Esophagus muscularis mucosa (tissue), 4 donors: ENCODE measurements at regions of chr17 and their contacts with region 1.

Region 1: DNA sequence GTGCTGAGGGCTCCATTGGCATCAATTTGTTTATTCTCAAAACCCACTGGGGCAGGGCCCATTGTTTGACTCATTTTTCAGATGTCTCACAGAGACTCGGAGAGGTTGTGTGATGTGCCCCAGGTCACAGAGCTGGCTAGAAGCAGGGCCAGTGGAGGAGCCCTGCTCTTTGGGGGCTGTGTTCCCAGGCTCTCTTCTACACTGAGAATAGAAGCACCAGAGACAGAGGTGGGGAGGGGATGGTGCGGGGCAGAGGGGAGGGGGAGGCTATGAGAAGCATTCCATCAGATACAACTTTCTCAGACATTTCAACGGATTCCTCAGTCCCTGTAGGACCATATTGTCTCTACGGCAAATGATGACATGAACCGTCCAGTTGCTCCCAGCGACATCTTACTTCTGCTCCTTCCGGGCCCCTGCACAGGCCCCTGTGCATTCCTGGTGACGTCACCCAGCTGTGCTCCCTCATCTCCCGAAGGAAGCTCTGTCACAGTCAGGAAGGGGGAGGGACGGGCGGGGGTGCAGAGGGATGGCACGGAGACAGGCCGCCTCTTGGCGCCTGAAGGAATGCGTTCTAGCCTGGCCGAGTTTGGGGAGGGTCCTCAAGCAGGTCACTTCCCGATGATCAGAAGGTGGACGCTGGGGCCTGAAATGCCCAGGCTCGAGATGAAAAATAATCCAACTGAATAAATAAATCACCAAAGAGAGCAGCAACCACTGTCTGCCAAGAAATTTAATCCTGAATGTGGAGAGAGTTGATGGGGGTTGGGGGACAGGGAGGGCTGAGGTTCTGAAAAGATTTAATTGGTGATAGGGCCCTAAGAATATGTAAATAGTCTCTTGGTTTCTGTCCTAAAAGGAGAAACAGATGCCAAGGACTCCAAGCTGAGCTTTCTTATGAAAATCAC is 114.1 kb downstream of the NOG start:
- DNase-seq: no peak
- H3K4me3 ChIP-seq: no peak overlapping the region
- H3K27ac ChIP-seq: peak overlapping the region in 2 of 4 donors; percentile 5 to 18
- H3K4me1 ChIP-seq: peaks cover 0 to 13% (median 11%) of the 10 kb centered on the region in 4 donors
- H3K27me3 ChIP-seq: no peaks in the 10 kb centered on the region
- CTCF ChIP-seq: no peak
- EP300 ChIP-seq: no peak
- POLR2A ChIP-seq: no peak

Region 2: GRCh38 chr17:56499799-56500388 is 207.7 kb before region 1 on chr17:
- intact Hi-C with region 1: loop called (anchors 5 kb)
- DNase-seq: no peak
- H3K4me3 ChIP-seq: no peak overlapping the region
- H3K27ac ChIP-seq: no peak overlapping the region
- H3K4me1 ChIP-seq: peaks cover 0 to 7% (median 0%) of the 10 kb centered on the region in 4 donors
- H3K27me3 ChIP-seq: no peaks in the 10 kb centered on the region
- CTCF ChIP-seq: peak in 2 of 3 experiments; percentile 17 to 18
- EP300 ChIP-seq: no peak
- POLR2A ChIP-seq: no peak

Region 3: DNA sequence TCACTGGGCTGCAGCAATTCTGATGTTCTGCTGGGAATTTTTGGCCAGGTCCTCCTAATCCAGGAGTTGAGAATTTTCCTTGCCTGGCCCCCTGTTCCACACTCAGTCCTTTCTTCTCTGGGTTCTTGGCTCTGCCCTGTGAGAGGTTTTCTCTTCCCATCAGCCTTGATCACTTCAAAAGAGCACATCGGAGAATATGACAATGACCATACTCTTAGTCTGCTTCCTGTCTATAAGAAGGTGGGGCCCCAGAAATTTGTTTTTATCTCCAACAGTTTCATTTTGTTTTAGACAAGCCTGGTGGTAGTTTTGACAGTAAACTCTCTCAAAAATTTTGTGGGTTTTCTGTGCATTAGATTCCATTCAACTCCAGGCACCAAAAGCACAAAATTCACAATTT is 55.4 kb after region 1 on chr17:
- intact Hi-C with region 1: loop called (anchors 10 kb)
- DNase-seq: no peak
- H3K4me3 ChIP-seq: no peak overlapping the region
- H3K27ac ChIP-seq: no peak overlapping the region
- H3K4me1 ChIP-seq: no peaks in the 10 kb centered on the region
- H3K27me3 ChIP-seq: peaks cover 0 to 6% (median 0%) of the 10 kb centered on the region in 4 donors
- CTCF ChIP-seq: no peak
- EP300 ChIP-seq: no peak
- POLR2A ChIP-seq: no peak